PC-3 (cell line): ENCODE measurements at regions of chr9 and their contacts with region 1.

Region 1: DNA sequence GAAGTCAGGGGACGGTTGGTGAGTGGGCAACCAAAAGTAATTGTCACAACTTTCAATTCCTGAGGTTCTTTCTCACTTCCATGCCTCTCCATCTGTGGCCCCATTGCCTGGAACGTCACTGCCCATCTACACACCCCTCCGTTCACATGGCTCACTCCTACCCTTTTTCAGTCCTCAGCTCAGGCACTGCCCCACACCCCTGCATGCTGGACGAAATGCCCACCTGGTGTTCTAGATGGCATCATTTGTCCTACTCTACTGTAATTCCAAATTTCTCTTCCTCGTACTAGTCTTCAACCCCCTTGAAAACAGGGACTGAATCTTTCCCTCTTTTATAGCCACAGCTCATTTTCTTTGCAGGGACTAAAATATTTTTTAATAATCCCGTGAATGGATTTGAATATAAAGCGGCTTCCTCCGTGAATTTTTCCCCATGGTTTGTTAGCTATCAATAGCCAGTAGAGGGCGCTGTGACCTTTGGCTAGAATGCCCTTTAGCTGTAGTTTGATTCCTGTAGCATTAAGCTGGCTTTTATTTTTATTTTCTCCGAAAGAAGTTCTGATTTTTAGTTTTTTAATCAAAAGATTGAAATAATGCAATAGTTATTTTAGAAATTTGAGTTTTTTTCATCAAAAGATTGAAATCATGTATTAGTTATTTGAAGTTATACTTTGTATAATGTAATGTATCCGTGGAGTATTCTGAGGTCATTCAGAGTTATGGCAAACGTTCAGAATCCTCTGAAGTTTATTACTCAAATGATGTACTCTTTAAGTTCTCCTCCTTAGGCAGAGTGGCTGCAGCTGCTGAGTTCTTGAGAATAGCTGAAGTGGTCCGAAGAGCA is 232.1 kb downstream of the SH3GL2 start:
- DNase-seq: peak; percentile 69
- ATAC-seq: peak; percentile 55
- H3K4me3 ChIP-seq: no peak overlapping the region
- H3K27ac ChIP-seq: no peak overlapping the region
- H3K4me1 ChIP-seq: no peaks in the 10 kb centered on the region
- H3K27me3 ChIP-seq: peaks cover 3% of the 10 kb centered on the region
- CTCF ChIP-seq: peak; percentile 86

Region 2: GRCh38 chr9:17063535-17064135 is 747.3 kb before region 1 on chr9:
- CTCF ChIA-PET with region 1: no interaction called
- POLR2A ChIA-PET with region 1: no interaction called
- intact Hi-C with region 1: no loop called
- DNase-seq: peak; percentile 70
- ATAC-seq: peak; percentile 76
- H3K4me3 ChIP-seq: no peak overlapping the region
- H3K27ac ChIP-seq: no peak overlapping the region
- H3K4me1 ChIP-seq: peaks cover 15% of the 10 kb centered on the region
- H3K27me3 ChIP-seq: no peaks in the 10 kb centered on the region
- CTCF ChIP-seq: peak; percentile 84

Region 3: GRCh38 chr9:17837965-17838364 is 27.0 kb after region 1 on chr9:
- CTCF ChIA-PET with region 1: interaction called, 11 read pairs
- POLR2A ChIA-PET with region 1: no interaction called
- intact Hi-C with region 1: no loop called
- DNase-seq: peak; percentile 18
- ATAC-seq: no peak
- H3K4me3 ChIP-seq: no peak overlapping the region
- H3K27ac ChIP-seq: no peak overlapping the region
- H3K4me1 ChIP-seq: no peaks in the 10 kb centered on the region
- H3K27me3 ChIP-seq: peaks cover 6% of the 10 kb centered on the region; the same call in 1 of the 2 replicates
- CTCF ChIP-seq: peak; percentile 46

Region 4: GRCh38 chr9:18060245-18060934 is 249.4 kb after region 1 on chr9:
- CTCF ChIA-PET with region 1: no interaction called
- POLR2A ChIA-PET with region 1: no interaction called
- intact Hi-C with region 1: no loop called
- DNase-seq: peak; percentile 31
- ATAC-seq: no peak
- H3K4me3 ChIP-seq: no peak overlapping the region
- H3K27ac ChIP-seq: no peak overlapping the region
- H3K4me1 ChIP-seq: 0 out of 2 replicates have a peak, but pooled peaks cover 4% of the 10 kb centered on the region
- H3K27me3 ChIP-seq: no peaks in the 10 kb centered on the region
- CTCF ChIP-seq: peak; percentile 57

Region 5: GRCh38 chr9:18149471-18150011 is 338.6 kb after region 1 on chr9:
- CTCF ChIA-PET with region 1: no interaction called
- POLR2A ChIA-PET with region 1: no interaction called
- intact Hi-C with region 1: loop called (anchors 5 kb)
- DNase-seq: peak; percentile 21
- ATAC-seq: peak; percentile 45
- H3K4me3 ChIP-seq: no peak overlapping the region
- H3K27ac ChIP-seq: no peak overlapping the region
- H3K4me1 ChIP-seq: no peaks in the 10 kb centered on the region
- H3K27me3 ChIP-seq: peaks cover 13% of the 10 kb centered on the region
- CTCF ChIP-seq: peak; percentile 43; the same call in 1 of the 2 replicates

Region 6: GRCh38 chr9:18208154-18209059 is 397.5 kb after region 1 on chr9:
- CTCF ChIA-PET with region 1: interaction called, 5 read pairs
- POLR2A ChIA-PET with region 1: no interaction called
- intact Hi-C with region 1: loop called (anchors 5 kb)
- DNase-seq: peak; percentile 77
- ATAC-seq: peak; percentile 69
- H3K4me3 ChIP-seq: no peak overlapping the region
- H3K27ac ChIP-seq: no peak overlapping the region
- H3K4me1 ChIP-seq: peaks cover 4% of the 10 kb centered on the region; the same call in 1 of the 2 replicates
- H3K27me3 ChIP-seq: no peaks in the 10 kb centered on the region
- CTCF ChIP-seq: peak; percentile 71

Region 7: GRCh38 chr9:19018201-19018600 is 1207.3 kb after region 1 on chr9:
- CTCF ChIA-PET with region 1: no interaction called
- POLR2A ChIA-PET with region 1: no interaction called
- intact Hi-C with region 1: loop called (anchors 5 kb)
- DNase-seq: no peak
- ATAC-seq: no peak
- H3K4me3 ChIP-seq: no peak overlapping the region
- H3K27ac ChIP-seq: no peak overlapping the region
- H3K4me1 ChIP-seq: no peaks in the 10 kb centered on the region
- H3K27me3 ChIP-seq: no peaks in the 10 kb centered on the region
- CTCF ChIP-seq: no peak

Region 8: DNA sequence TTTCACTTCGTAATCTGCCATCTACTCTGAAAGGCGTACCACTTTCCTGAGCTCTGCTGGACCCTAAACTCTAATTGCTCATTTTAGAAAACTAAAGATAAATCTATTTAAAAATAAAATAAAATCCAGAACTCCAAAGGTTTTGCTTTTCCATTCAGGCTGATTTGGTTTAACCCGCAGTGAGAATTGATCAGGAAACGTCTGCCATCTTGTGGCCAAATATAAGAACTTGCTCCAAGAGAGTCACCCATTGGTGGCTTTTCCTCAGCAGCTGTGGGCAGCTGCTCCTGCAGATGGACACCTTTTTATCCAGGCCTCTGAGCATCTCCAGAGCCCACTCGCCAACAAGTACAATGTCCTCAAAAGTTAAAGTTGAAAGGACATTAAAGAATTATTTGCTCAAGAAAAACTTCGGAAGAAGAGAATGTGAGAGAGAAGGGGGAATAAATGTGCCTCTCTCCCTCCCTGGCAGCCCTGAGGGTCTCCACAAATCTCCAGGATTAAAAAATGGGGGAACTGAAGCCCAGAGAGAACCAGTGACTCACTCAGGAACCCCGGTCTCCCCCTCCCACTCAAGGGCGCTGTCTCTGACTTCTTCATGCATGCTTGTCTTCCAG is 1218.0 kb after region 1 on chr9:
- CTCF ChIA-PET with region 1: no interaction called
- POLR2A ChIA-PET with region 1: no interaction called
- intact Hi-C with region 1: loop called (anchors 1 kb)
- DNase-seq: peak; percentile 69
- ATAC-seq: peak; percentile 71
- H3K4me3 ChIP-seq: no peak overlapping the region
- H3K27ac ChIP-seq: no peak overlapping the region
- H3K4me1 ChIP-seq: no peaks in the 10 kb centered on the region
- H3K27me3 ChIP-seq: no peaks in the 10 kb centered on the region
- CTCF ChIP-seq: peak; percentile 70